KBM-7 (cell line): ENCODE measurements at regions of chr22 and their contacts with region 1.

Region 1: DNA sequence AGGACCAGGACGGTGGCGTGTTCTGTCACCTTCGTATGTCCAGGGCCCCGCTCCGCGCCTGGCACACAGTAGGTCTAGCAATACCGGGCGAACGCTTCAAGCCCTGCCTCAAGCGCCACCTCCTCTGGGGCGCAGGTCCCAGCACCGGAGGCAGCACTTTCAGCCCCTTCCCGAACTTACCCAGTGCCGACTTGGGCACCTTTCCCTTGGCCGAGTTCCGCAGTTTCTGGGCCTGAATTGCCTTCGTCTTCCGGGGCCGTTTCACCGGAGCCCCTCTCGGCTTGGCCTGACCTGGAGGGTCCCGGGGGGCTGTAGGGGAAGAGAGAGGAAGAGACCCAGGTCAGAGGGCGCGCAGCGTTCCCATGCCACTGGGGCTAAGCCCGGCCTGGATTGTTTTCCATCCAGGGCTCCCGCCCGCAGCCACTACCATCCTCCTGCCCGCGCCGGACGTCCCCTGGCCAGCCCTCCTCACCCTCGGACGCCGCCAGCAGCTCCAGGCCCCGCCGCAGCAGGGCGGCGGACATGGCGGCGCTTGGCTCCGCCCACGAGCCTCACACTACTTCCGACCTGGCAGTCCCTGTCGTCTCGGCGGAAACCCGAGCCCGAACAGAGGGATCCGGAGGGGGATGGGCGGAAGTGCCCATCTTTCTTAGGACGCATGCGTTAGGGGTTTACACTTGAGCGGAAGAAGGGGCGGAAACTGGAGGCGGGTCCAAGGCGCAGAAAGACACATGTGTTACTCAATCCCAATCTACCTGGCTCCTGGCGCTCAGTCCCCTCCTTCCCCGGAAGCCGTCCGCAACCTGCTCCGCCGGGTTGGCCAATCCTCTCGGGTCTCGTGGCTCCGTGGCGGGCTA is at the start of gene RPS19BP1:
- DNase-seq: peak; percentile 100

Region 2: DNA sequence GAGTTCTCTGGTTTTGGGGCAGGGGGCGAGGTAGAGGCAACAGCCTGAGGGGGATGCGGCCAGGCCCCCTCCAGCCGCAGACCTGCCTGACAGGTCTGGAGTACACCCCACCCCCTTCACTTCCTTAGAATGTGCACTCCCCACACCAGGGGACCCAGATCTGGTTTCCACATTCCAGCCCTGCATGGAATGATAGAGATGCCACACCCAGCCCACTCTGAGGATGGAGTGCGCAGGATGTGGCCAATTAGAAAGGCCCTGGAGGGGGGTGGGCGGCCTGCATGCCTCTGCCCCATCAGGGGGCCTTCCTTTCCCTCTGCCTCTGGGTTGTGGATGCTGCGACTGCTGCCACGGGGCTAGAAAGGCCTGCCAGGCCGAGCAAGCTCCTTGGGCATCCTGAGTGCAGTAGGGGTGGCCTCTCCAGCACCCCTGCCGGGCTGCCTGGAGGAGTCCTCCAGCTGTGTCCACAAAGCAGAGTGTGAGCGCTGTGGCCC is 103.8 kb before region 1 on chr22:
- in situ Hi-C with region 1: no loop called
- DNase-seq: no peak

Region 3: DNA sequence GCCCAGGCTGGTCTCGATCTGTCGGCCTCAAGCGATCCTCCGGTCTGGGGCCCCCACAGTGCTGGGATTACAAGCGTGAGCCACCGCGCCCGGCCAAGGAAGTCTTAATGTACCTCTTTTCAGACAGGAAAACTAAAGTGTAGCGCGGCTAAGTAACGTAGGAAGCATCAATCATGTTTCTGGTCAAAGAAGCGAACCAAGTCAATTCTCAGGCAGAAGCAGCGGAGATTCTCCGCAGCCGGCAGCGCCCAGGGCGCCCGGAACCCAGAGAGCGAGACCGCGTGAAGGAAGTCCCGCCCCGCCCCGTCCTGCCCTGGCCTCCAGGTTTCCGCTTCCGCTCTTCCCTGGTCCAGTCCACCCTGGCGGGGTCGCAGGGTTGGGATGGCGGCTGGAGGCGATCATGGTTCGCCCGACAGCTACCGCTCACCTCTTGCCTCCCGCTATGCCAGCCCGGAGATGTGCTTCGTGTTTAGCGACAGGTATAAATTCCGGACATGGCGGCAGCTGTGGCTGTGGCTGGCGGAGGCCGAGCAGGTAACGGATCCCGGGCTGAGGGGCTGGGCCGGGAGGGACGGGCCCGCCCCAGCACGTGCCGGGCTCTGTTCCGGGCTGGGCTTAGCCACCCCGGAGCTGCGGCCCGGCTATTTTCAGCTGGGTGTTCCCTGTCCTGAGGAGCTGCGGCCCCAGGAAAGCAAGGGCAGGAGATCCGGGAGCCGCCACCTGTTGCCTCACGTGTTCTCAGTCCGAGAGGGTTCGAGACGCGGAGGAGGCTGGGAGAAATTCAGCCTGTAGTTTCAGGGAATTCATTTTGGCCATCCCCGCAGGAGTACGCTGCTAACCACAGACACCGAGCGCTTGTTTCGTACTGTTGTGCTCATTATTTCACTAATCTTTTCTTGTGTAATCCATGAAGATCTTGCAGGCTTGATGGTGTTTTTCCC is 814.0 kb after region 1 on chr22 and contains the start of gene ADSL:
- in situ Hi-C with region 1: loop called (anchors 25 kb)
- DNase-seq: peak; percentile 91